ENCODE measurements at regions of chr21 and their contacts with region 1.

Region 1: GRCh38 chr21:38755681-38756371 is 49.9 kb upstream of the ETS2 start:
- DNase-seq: no peak
- H3K4me3 Mint-ChIP-seq: no peak overlapping the region
- H3K27ac Mint-ChIP-seq: peak overlapping the region; percentile 50
- H3K4me1 Mint-ChIP-seq: peaks cover 10% of the 10 kb centered on the region
- H3K27me3 Mint-ChIP-seq: peaks cover 4% of the 10 kb centered on the region

Region 2: GRCh38 chr21:38787461-38788274 is 31.8 kb after region 1 on chr21:
- CTCF ChIA-PET with region 1: no interaction called
- POLR2A ChIA-PET with region 1: interaction called, 10 read pairs
- DNase-seq: no peak
- H3K4me3 Mint-ChIP-seq: no peak overlapping the region
- H3K27ac Mint-ChIP-seq: no peak overlapping the region
- H3K4me1 Mint-ChIP-seq: peaks cover 8% of the 10 kb centered on the region
- H3K27me3 Mint-ChIP-seq: no peaks in the 10 kb centered on the region

Measured in activated CD4-positive, alpha-beta T cell treated with anti-CD3 and anti-CD28 coated beads, Interleukin-2, amount 10 ng/mL, durations not matched to agents 7 days and 5 days (primary cell).